CD8-positive, alpha-beta T cell (primary cell): ENCODE measurements at regions of chr4 and their contacts with region 1.

Region 1: GRCh38 chr4:148025981-148026380 is 294.1 kb downstream of the ARHGAP10 start:
- DNase-seq: no peak
- ATAC-seq: no peak
- H3K4me3 ChIP-seq: no peak overlapping the region
- H3K4me3 Mint-ChIP-seq: no peak overlapping the region
- H3K27ac ChIP-seq: no peak overlapping the region
- H3K27ac Mint-ChIP-seq: no peak overlapping the region
- H3K4me1 ChIP-seq: no peaks in the 10 kb centered on the region
- H3K4me1 Mint-ChIP-seq: peaks cover 2% of the 10 kb centered on the region
- H3K27me3 ChIP-seq: no peaks in the 10 kb centered on the region
- H3K27me3 Mint-ChIP-seq: no peaks in the 10 kb centered on the region
- CTCF ChIP-seq: no peak

Region 2: GRCh38 chr4:148192526-148192925 is 166.5 kb after region 1 on chr4:
- CTCF ChIA-PET with region 1: no interaction called
- POLR2A ChIA-PET with region 1: no interaction called
- intact Hi-C with region 1: no loop called
- DNase-seq: no peak
- ATAC-seq: no peak
- H3K4me3 ChIP-seq: no peak overlapping the region
- H3K4me3 Mint-ChIP-seq: no peak overlapping the region
- H3K27ac ChIP-seq: no peak overlapping the region
- H3K27ac Mint-ChIP-seq: peak overlapping the region; percentile 65
- H3K4me1 ChIP-seq: no peaks in the 10 kb centered on the region
- H3K4me1 Mint-ChIP-seq: peaks cover 2% of the 10 kb centered on the region
- H3K27me3 ChIP-seq: no peaks in the 10 kb centered on the region
- H3K27me3 Mint-ChIP-seq: no peaks in the 10 kb centered on the region
- CTCF ChIP-seq: no peak

Region 3: DNA sequence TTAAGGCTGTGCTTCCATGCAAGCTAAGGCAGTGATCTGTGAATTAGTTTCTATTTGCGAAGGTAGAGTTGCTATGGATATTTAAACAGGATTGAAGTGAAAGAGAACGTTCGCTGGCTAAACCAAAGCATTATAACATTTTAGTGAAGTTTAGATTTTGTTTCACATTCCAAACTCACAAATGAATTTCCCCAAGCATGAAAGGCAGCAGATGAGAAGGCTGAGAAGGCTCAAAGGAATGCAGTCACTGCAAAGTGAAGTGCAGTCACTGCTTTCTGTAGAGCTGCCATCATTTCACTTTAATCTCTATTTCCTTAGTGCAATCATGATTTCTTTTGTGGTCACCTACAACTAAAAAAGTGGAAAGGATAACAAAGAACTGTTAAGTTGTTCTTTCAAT is 751.0 kb after region 1 on chr4:
- CTCF ChIA-PET with region 1: no interaction called
- POLR2A ChIA-PET with region 1: no interaction called
- intact Hi-C with region 1: loop called in 1 of 2 experiments (anchors 10 kb)
- DNase-seq: no peak
- ATAC-seq: no peak
- H3K4me3 ChIP-seq: no peak overlapping the region
- H3K4me3 Mint-ChIP-seq: no peak overlapping the region
- H3K27ac ChIP-seq: no peak overlapping the region
- H3K27ac Mint-ChIP-seq: no peak overlapping the region
- H3K4me1 ChIP-seq: no peaks in the 10 kb centered on the region
- H3K4me1 Mint-ChIP-seq: no peaks in the 10 kb centered on the region
- H3K27me3 ChIP-seq: no peaks in the 10 kb centered on the region
- H3K27me3 Mint-ChIP-seq: no peaks in the 10 kb centered on the region
- CTCF ChIP-seq: no peak

Region 4: DNA sequence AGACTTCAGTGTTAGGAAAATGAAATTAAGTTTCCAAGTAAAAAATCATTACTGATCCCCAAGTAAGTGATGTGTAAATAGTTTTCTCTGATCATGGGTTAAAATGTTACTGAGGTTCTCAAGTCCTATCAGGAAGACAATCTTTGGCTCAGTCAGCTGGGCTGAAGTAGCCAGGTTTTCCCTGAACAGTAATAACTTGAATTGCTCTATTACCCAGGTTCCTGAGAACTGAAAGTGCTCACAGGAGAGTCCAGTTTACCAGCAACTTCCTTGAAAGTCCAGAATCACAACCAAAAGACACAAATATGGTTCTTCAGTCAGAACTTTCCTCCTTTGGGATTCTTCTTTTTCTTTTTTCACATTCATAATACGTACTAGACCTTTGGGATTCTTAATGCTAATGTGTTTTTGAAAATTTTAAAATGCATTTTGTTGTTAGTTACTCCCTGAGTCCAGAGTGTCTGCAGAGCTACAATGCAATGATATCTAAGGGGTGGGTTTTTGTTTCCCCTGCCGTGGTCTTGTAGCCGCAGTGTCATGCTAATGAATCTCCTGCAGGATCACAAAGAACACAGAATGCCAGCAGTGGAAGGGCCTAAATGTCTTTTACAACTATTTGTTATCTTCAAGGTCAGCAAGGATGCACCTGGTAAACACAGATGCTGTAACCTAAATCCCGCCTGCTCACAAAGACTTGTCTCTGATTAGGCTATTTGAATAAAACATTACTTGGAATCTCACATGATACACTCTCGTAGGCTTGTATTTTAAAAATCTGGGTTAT is 856.1 kb after region 1 on chr4:
- CTCF ChIA-PET with region 1: no interaction called
- POLR2A ChIA-PET with region 1: no interaction called
- intact Hi-C with region 1: no loop called
- DNase-seq: no peak
- ATAC-seq: no peak
- H3K4me3 ChIP-seq: no peak overlapping the region
- H3K4me3 Mint-ChIP-seq: no peak overlapping the region
- H3K27ac ChIP-seq: no peak overlapping the region
- H3K27ac Mint-ChIP-seq: no peak overlapping the region
- H3K4me1 ChIP-seq: no peaks in the 10 kb centered on the region
- H3K4me1 Mint-ChIP-seq: no peaks in the 10 kb centered on the region
- H3K27me3 ChIP-seq: no peaks in the 10 kb centered on the region
- H3K27me3 Mint-ChIP-seq: no peaks in the 10 kb centered on the region
- CTCF ChIP-seq: no peak

Region 5: DNA sequence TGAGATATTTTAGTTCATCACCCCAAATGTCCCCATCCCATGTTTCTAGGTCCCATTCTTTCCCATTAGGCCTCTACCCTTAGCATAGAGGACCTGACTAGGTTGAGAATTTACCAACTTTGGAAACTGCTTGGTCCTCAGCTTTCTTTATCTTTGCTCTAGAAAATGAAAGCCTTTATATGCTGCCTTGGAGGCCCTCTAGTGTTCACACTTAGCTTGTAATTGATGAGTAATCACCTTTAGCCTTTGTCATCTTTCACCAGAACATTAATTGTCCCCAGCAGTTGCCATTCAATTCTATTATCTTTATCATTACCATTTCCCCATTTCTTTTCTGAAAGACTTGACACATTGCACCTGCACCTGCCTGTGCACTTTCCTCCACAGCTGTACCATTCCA is 1005.4 kb after region 1 on chr4:
- CTCF ChIA-PET with region 1: interaction called, 5 read pairs
- POLR2A ChIA-PET with region 1: no interaction called
- intact Hi-C with region 1: loop called (anchors 5 to 10 kb)
- DNase-seq: peak in 2 of 9 experiments; percentile 5 to 12
- ATAC-seq: no peak
- H3K4me3 ChIP-seq: no peak overlapping the region
- H3K4me3 Mint-ChIP-seq: no peak overlapping the region
- H3K27ac ChIP-seq: no peak overlapping the region
- H3K27ac Mint-ChIP-seq: no peak overlapping the region
- H3K4me1 ChIP-seq: no peaks in the 10 kb centered on the region
- H3K4me1 Mint-ChIP-seq: no peaks in the 10 kb centered on the region
- H3K27me3 ChIP-seq: no peaks in the 10 kb centered on the region
- H3K27me3 Mint-ChIP-seq: no peaks in the 10 kb centered on the region
- CTCF ChIP-seq: no peak

Region 6: DNA sequence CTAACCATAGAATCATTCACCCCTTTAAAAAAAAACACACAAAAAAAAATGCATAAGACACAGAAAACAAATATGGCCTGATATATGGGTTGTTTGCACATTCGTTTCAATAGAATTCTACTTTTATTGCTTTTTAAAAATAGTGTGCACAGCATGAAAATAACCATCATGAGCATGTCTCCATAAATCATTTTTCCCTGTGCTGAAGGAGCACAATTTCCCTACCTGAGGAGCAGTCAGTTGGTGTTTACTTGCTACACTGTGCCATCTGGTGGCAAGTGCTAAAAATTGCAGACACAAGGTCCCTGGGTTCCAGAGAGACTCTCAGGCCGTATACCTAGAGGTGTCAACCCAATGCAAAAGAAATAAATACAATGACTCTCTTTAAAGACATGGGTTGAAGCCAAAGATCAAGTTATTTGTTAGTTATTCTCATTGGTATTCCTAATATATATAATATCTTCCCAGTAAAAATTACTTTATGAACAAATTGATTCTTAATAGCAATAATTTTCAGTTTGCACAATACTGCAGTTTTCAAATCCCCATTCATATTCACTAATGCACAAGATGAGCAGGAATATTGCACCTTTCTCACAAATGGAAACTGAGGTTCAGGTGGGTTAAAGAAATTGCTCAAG is 1238.2 kb after region 1 on chr4:
- CTCF ChIA-PET with region 1: interaction called, 5 read pairs
- POLR2A ChIA-PET with region 1: no interaction called
- intact Hi-C with region 1: loop called (anchors 5 kb)
- DNase-seq: peak in 2 of 9 experiments; percentile 20 to 23
- ATAC-seq: no peak
- H3K4me3 ChIP-seq: no peak overlapping the region
- H3K4me3 Mint-ChIP-seq: no peak overlapping the region
- H3K27ac ChIP-seq: no peak overlapping the region
- H3K27ac Mint-ChIP-seq: no peak overlapping the region
- H3K4me1 ChIP-seq: no peaks in the 10 kb centered on the region
- H3K4me1 Mint-ChIP-seq: no peaks in the 10 kb centered on the region
- H3K27me3 ChIP-seq: no peaks in the 10 kb centered on the region
- H3K27me3 Mint-ChIP-seq: no peaks in the 10 kb centered on the region
- CTCF ChIP-seq: no peak